ENCODE measurements at regions of chr10 and their contacts with region 1.

Region 1: GRCh38 chr10:123582084-123582989 is 83.8 kb upstream of the GPR26 start:
- DNase-seq: no peak
- ATAC-seq: peak; percentile 94
- H3K4me3 ChIP-seq: no peak overlapping the region
- H3K27ac ChIP-seq: no peak overlapping the region
- H3K4me1 ChIP-seq: no peaks in the 10 kb centered on the region
- H3K27me3 ChIP-seq: peaks cover 3 to 7% of the 10 kb centered on the region in 2 experiments; a peak in 2 of 4 replicates
- CTCF ChIP-seq: peak; percentile 83 to 95 (median 93)
- EP300 ChIP-seq: no peak
- POLR2A ChIP-seq: no peak
- RAD21 ChIP-seq: peak; percentile 98

Region 2: GRCh38 chr10:123865880-123866279 is 283.5 kb after region 1 on chr10:
- CTCF ChIA-PET with region 1: interaction called, 4 read pairs
- POLR2A ChIA-PET with region 1: no interaction called
- RAD21 ChIA-PET with region 1: no interaction called
- SMC1A ChIA-PET with region 1: no interaction called
- in situ Hi-C with region 1: no loop called
- intact Hi-C with region 1: loop called (anchors 2 kb)
- DNase-seq: no peak
- ATAC-seq: no peak
- H3K4me3 ChIP-seq: no peak overlapping the region
- H3K27ac ChIP-seq: no peak overlapping the region
- H3K4me1 ChIP-seq: no peaks in the 10 kb centered on the region
- H3K27me3 ChIP-seq: peaks cover 0 to 2% of the 10 kb centered on the region in 2 experiments; a peak in 3 of 4 replicates
- CTCF ChIP-seq: no peak
- EP300 ChIP-seq: no peak
- POLR2A ChIP-seq: no peak
- RAD21 ChIP-seq: no peak

Region 3: GRCh38 chr10:123897146-123897545 is 314.8 kb after region 1 on chr10:
- CTCF ChIA-PET with region 1: interaction called, 9 read pairs
- POLR2A ChIA-PET with region 1: no interaction called
- RAD21 ChIA-PET with region 1: interaction called, 6 read pairs
- SMC1A ChIA-PET with region 1: interaction called, 3 read pairs
- in situ Hi-C with region 1: no loop called
- intact Hi-C with region 1: loop called (anchors 10 kb)
- DNase-seq: no peak
- ATAC-seq: peak; percentile 38; the same call in 1 of the 3 replicates
- H3K4me3 ChIP-seq: no peak overlapping the region
- H3K27ac ChIP-seq: no peak overlapping the region
- H3K4me1 ChIP-seq: no peaks in the 10 kb centered on the region
- H3K27me3 ChIP-seq: peaks cover 0 to 3% of the 10 kb centered on the region in 2 experiments; a peak in 2 of 4 replicates
- CTCF ChIP-seq: peak; percentile 32 to 39 (median 37); a peak in 4 of 6 replicates
- EP300 ChIP-seq: no peak
- POLR2A ChIP-seq: no peak
- RAD21 ChIP-seq: peak; percentile 60

Region 4: GRCh38 chr10:123967396-123968243 is 385.3 kb after region 1 on chr10:
- CTCF ChIA-PET with region 1: interaction called, 133 read pairs
- POLR2A ChIA-PET with region 1: no interaction called
- RAD21 ChIA-PET with region 1: interaction called, 30 read pairs
- SMC1A ChIA-PET with region 1: interaction called, 24 read pairs
- in situ Hi-C with region 1: loop called (anchors 5 kb)
- intact Hi-C with region 1: loop called (anchors 1 kb)
- DNase-seq: no peak
- ATAC-seq: peak; percentile 96
- H3K4me3 ChIP-seq: no peak overlapping the region
- H3K27ac ChIP-seq: no peak overlapping the region
- H3K4me1 ChIP-seq: no peaks in the 10 kb centered on the region
- H3K27me3 ChIP-seq: no peaks in the 10 kb centered on the region; a peak in 1 of 4 replicates
- CTCF ChIP-seq: peak; percentile 90 to 93 (median 91)
- EP300 ChIP-seq: no peak
- POLR2A ChIP-seq: no peak
- RAD21 ChIP-seq: peak; percentile 96

Region 5: GRCh38 chr10:124403548-124403947 is 821.2 kb after region 1 on chr10:
- CTCF ChIA-PET with region 1: interaction called, 4 read pairs
- POLR2A ChIA-PET with region 1: no interaction called
- RAD21 ChIA-PET with region 1: no interaction called
- SMC1A ChIA-PET with region 1: no interaction called
- in situ Hi-C with region 1: no loop called
- intact Hi-C with region 1: loop called (anchors 5 kb)
- DNase-seq: peak; percentile 45
- ATAC-seq: peak; percentile 100
- H3K4me3 ChIP-seq: no peak overlapping the region
- H3K27ac ChIP-seq: no peak overlapping the region
- H3K4me1 ChIP-seq: no peaks in the 10 kb centered on the region
- H3K27me3 ChIP-seq: no peaks in the 10 kb centered on the region
- CTCF ChIP-seq: peak; percentile 56 to 76 (median 73)
- EP300 ChIP-seq: no peak
- POLR2A ChIP-seq: 0 out of 2 replicates have a peak, but pooled peaks have one; percentile 19
- RAD21 ChIP-seq: peak; percentile 72

Measured in GM12878 (cell line).